ENCODE measurements at regions of chr6 and their contacts with region 1.

Region 1: GRCh38 chr6:149012040-149012545 is 265.3 kb downstream of the UST start:
- DNase-seq: peak; percentile 90
- H3K4me3 ChIP-seq: no peak overlapping the region
- H3K27ac ChIP-seq: no peak overlapping the region
- H3K4me1 ChIP-seq: peaks cover 9% of the 10 kb centered on the region
- H3K27me3 ChIP-seq: no peaks in the 10 kb centered on the region
- CTCF ChIP-seq: no peak

Region 2: GRCh38 chr6:148972481-148972880 is 39.6 kb before region 1 on chr6:
- CTCF ChIA-PET with region 1: no interaction called
- dilution Hi-C with region 1: loop called (anchors 5 kb)
- in situ Hi-C with region 1: no loop called
- intact Hi-C with region 1: no loop called
- DNase-seq: peak; percentile 64
- H3K4me3 ChIP-seq: no peak overlapping the region
- H3K27ac ChIP-seq: no peak overlapping the region
- H3K4me1 ChIP-seq: peaks cover 3% of the 10 kb centered on the region
- H3K27me3 ChIP-seq: no peaks in the 10 kb centered on the region
- CTCF ChIP-seq: peak in 1 of 2 donors; percentile 6

Region 3: GRCh38 chr6:149431905-149432775 is 420.0 kb after region 1 on chr6:
- CTCF ChIA-PET with region 1: no interaction called
- dilution Hi-C with region 1: no loop called
- in situ Hi-C with region 1: no loop called
- intact Hi-C with region 1: no loop called
- DNase-seq: peak; percentile 65
- H3K4me3 ChIP-seq: peak overlapping the region in 1 of 3 experiments; percentile 17
- H3K27ac ChIP-seq: no peak overlapping the region
- H3K4me1 ChIP-seq: no peaks in the 10 kb centered on the region
- H3K27me3 ChIP-seq: no peaks in the 10 kb centered on the region
- CTCF ChIP-seq: peak; percentile 82 to 89

Measured in mammary epithelial cell (primary cell).